HEK293 (cell line): ENCODE measurements at regions of chr2 and their contacts with region 1.

Region 1: GRCh38 chr2:63698825-63699548 is 110.2 kb downstream of the MDH1 start:
- H3K4me3 ChIP-seq: no peak overlapping the region
- H3K27ac ChIP-seq: no peak overlapping the region
- H3K4me1 ChIP-seq: no peaks in the 10 kb centered on the region
- CTCF ChIP-seq: 0 out of 2 replicates have a peak, but pooled peaks have one; percentile 24

Region 2: DNA sequence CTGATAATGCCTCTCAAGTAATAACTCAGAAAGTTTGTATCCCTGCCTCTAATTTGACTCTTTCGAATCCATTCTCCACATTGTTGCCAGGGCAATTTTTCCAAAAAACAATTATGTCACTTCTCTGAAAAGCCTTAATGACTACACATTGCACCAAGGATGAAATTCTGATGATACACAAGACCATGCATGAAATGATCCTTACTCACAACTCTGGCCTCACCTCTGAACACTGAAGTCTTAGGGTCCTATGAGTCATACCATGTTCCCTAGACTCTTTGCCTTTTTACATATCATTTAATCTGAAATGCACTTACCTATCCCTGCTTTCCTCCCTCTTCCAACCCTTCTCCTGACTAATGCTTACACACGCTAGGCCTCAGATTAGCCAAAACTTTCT is 161.7 kb before region 1 on chr2:
- CTCF ChIA-PET with region 1: no interaction called
- POLR2A ChIA-PET with region 1: no interaction called
- H3K4me3 ChIP-seq: no peak overlapping the region
- H3K27ac ChIP-seq: no peak overlapping the region
- H3K4me1 ChIP-seq: no peaks in the 10 kb centered on the region
- CTCF ChIP-seq: no peak

Region 3: DNA sequence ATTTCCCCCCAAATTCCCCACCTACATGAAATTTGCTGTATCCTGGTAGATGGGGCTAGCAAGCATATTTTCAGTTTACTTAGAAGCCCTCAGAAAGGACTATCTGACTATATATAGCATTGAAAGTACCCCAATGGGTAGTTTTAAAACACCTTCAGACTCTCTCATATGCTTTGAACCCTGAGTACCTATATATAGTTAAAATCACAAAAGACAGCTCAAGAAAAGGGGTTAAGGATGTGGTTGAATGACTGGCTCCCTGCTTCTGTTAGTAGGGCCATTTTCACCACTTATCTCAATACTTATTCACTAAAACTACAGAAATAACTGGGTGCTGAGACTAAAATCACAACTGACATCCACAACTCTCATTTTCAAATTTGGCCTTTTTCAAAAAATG is 129.2 kb before region 1 on chr2:
- CTCF ChIA-PET with region 1: no interaction called
- POLR2A ChIA-PET with region 1: no interaction called
- H3K4me3 ChIP-seq: no peak overlapping the region
- H3K27ac ChIP-seq: no peak overlapping the region
- H3K4me1 ChIP-seq: no peaks in the 10 kb centered on the region
- CTCF ChIP-seq: no peak

Region 4: GRCh38 chr2:63628403-63628942 is 70.5 kb before region 1 on chr2:
- CTCF ChIA-PET with region 1: no interaction called
- POLR2A ChIA-PET with region 1: no interaction called
- H3K4me3 ChIP-seq: no peak overlapping the region
- H3K27ac ChIP-seq: no peak overlapping the region
- H3K4me1 ChIP-seq: no peaks in the 10 kb centered on the region
- CTCF ChIP-seq: no peak

Region 5: GRCh38 chr2:63710732-63711131 is 11.7 kb after region 1 on chr2:
- CTCF ChIA-PET with region 1: interaction called, 23 read pairs
- POLR2A ChIA-PET with region 1: no interaction called
- H3K4me3 ChIP-seq: no peak overlapping the region
- H3K27ac ChIP-seq: no peak overlapping the region
- H3K4me1 ChIP-seq: no peaks in the 10 kb centered on the region
- CTCF ChIP-seq: no peak

Region 6: GRCh38 chr2:63856303-63856603 is 157.3 kb after region 1 on chr2:
- CTCF ChIA-PET with region 1: interaction called, 23 read pairs
- POLR2A ChIA-PET with region 1: no interaction called
- H3K4me3 ChIP-seq: no peak overlapping the region
- H3K27ac ChIP-seq: no peak overlapping the region
- H3K4me1 ChIP-seq: no peaks in the 10 kb centered on the region
- CTCF ChIP-seq: no peak

Region 7: GRCh38 chr2:63861220-63861822 is 162.3 kb after region 1 on chr2:
- CTCF ChIA-PET with region 1: interaction called, 23 read pairs
- POLR2A ChIA-PET with region 1: no interaction called
- H3K4me3 ChIP-seq: no peak overlapping the region
- H3K27ac ChIP-seq: no peak overlapping the region
- H3K4me1 ChIP-seq: no peaks in the 10 kb centered on the region
- CTCF ChIP-seq: no peak